Upper lobe of right lung (tissue), 1 donor: ENCODE measurements at regions of chr21 and their contacts with region 1.

Region 1: GRCh38 chr21:38355992-38356797 is 99.4 kb downstream of the KCNJ15 start:
- DNase-seq: peak; percentile 91
- ATAC-seq: peak; percentile 90
- H3K4me3 ChIP-seq: no peak overlapping the region
- H3K27ac ChIP-seq: no peak overlapping the region
- H3K4me1 ChIP-seq: peaks cover 13% of the 10 kb centered on the region
- H3K27me3 ChIP-seq: no peaks in the 10 kb centered on the region
- CTCF ChIP-seq: peak; percentile 97

Region 2: DNA sequence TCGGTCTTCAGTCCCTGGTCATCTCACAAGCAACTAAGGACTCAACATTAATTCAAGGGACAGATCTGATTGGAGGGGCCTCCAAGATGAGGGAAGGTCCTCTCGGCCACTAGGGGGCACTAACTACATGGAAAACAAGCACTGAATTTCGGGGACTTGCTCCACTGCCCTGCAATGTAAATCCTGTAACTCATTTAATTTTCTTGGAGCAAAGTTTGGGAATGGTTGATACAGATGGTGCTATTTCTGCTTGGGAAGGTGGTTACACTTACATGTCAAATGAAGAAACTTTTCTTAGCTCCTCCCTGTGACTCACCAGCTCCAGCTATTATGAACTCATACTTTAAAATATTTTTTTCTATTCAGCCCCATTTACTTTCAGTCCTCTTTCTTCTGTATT is 196.8 kb before region 1 on chr21:
- intact Hi-C with region 1: loop called (anchors 5 kb)
- DNase-seq: peak; percentile 66
- ATAC-seq: peak; percentile 94
- H3K4me3 ChIP-seq: no peak overlapping the region
- H3K27ac ChIP-seq: no peak overlapping the region
- H3K4me1 ChIP-seq: no peaks in the 10 kb centered on the region
- H3K27me3 ChIP-seq: peaks cover 11% of the 10 kb centered on the region
- CTCF ChIP-seq: peak; percentile 83

Region 3: DNA sequence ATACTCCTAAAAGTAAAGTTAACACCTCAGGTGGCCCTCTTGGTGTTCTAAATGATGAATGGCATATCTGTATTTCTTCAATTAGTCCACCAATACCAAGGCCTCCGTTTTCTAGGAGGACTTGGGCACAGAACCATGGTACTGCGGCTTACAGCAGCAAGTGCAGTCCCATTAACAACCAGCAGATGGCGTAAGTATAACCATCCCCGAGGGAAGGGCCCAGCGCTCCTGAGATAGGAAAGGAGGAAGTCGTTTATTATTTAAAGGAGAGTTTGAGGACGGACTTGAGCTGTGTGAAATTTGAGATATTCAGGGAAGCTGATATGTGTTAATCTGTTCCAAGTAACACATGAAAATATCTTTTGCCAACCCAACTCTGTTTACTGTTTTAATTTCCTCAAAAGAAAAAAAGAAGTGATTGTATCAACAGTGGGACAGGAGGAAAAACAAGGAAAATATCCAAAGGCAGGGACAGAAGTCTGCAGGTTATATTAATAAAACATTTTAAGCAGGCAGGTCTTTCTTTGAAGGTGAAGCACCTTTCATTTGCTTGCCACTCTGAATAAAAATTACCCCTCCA is 137.1 kb before region 1 on chr21:
- intact Hi-C with region 1: loop called (anchors 5 kb)
- DNase-seq: peak; percentile 77
- ATAC-seq: peak; percentile 99
- H3K4me3 ChIP-seq: no peak overlapping the region
- H3K27ac ChIP-seq: no peak overlapping the region
- H3K4me1 ChIP-seq: peaks cover 7% of the 10 kb centered on the region
- H3K27me3 ChIP-seq: no peaks in the 10 kb centered on the region
- CTCF ChIP-seq: peak; percentile 99